Natural killer cell (primary cell): ENCODE measurements at regions of chr20 and their contacts with region 1.

Region 1: DNA sequence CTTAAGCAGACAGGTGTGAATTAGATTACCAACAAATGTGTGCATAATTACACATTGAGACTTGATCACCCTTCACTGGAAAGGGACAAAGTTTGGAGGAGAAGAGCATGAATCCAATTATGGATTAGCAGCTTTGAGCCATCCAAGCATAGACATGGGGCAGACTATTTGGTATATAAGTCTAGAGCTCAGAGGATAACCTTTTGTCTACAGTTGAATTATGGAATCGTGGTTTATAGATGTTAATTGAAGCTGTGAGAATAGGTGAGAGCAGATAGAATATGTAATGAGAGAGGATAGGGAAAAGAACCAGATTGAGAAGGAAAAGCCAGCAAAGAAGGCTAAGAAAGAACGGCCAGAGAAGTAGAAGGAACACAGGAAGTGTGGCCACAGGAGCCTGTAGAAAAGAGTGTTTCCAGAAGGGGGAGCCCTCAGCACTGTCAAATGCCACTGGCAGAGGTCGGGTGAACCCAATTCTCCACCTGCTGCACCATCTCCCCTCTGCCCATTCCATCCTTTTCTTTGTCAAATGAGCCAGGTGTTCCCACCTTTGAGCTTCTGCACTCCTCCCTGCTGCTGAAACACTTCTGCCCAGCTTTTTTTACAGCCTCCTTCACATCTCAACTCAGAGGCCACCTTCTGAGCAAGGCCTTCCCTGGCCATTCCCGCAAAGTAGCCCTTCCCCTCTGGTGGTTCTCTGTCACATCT is 7.3 kb downstream of the DNTTIP1 start:
- DNase-seq: peak; percentile 48 to 81
- ATAC-seq: peak; percentile 90 to 98 (median 98)
- H3K4me3 ChIP-seq: no peak overlapping the region
- H3K4me3 Mint-ChIP-seq: no peak overlapping the region
- H3K27ac ChIP-seq: no peak overlapping the region
- H3K27ac Mint-ChIP-seq: peak overlapping the region; percentile 0 to 6
- H3K4me1 ChIP-seq: peaks cover 10% of the 10 kb centered on the region
- H3K4me1 Mint-ChIP-seq: peaks cover 11 to 15% of the 10 kb centered on the region in 2 donors
- H3K27me3 ChIP-seq: no peaks in the 10 kb centered on the region
- H3K27me3 Mint-ChIP-seq: no peaks in the 10 kb centered on the region
- CTCF ChIP-seq: peak; percentile 84

Region 2: DNA sequence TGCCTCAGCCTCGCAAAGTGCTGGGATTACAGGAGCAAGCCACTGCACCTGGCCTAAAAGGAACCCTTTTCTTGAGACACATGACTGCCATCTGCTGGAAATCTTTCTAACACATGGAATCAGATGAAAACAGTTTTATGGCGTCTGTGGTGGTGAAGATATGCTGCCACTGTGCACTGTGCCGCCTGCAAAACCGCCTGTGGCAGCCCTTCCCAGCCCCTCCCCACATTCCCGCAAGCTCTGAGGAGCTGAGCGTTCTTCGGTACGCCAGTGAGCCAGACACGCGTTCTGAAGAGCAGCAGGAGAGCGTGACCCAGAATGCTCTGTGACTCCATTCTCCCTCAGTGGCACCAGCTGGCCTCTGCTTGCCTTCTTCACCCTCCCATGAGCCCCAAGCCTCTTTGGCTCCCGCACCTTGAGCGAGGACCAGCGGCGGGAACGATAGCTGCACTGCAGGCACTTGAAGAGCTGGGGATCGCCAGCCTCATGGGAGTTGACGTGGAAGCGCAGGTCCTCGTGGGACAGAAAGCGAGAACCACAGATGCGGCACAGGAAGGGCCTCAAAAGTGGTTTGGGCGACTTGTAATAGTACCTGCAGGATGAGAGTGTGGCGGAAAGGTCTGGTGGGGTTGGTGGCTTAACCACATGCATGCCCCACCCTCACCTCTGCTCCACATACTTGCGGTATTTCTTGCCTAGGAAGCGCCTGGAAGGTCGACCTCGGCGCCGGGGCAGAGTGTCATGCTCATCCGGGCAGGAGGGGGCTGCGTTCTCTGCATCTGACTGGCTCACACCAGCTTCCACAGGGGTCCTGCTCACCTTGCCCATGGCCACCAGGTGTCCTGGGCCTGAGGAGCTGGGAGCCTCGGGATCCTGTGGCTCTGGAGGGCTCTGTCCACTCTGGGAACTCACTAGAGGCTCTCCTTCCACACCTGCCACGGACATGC is 164.2 kb after region 1 on chr20:
- intact Hi-C with region 1: loop called (anchors 1 kb)
- DNase-seq: peak in 1 of 2 donors; percentile 70
- ATAC-seq: peak; percentile 40 to 81 (median 41)
- H3K4me3 ChIP-seq: no peak overlapping the region
- H3K4me3 Mint-ChIP-seq: no peak overlapping the region
- H3K27ac ChIP-seq: no peak overlapping the region
- H3K27ac Mint-ChIP-seq: peak overlapping the region in 1 of 2 donors; percentile 80
- H3K4me1 ChIP-seq: peaks cover 16% of the 10 kb centered on the region
- H3K4me1 Mint-ChIP-seq: peaks cover 0 to 6% of the 10 kb centered on the region in 2 donors
- H3K27me3 ChIP-seq: no peaks in the 10 kb centered on the region
- H3K27me3 Mint-ChIP-seq: no peaks in the 10 kb centered on the region
- CTCF ChIP-seq: peak; percentile 43